ENCODE measurements at regions of chr12 and their contacts with region 1.

Region 1: GRCh38 chr12:102061560-102062418 is at the start of gene WASHC3:
- DNase-seq: peak; percentile 98
- H3K4me3 Mint-ChIP-seq: peak within 1 kb of the TSS; percentile 96
- H3K27ac Mint-ChIP-seq: peak within 1 kb of the TSS; percentile 98
- H3K4me1 Mint-ChIP-seq: peaks cover 29% of the 10 kb centered on the region
- H3K27me3 Mint-ChIP-seq: no peaks in the 10 kb centered on the region
- total RNA-seq, gene WASHC3: 22.1 to 25.6 TPM

Region 2: DNA sequence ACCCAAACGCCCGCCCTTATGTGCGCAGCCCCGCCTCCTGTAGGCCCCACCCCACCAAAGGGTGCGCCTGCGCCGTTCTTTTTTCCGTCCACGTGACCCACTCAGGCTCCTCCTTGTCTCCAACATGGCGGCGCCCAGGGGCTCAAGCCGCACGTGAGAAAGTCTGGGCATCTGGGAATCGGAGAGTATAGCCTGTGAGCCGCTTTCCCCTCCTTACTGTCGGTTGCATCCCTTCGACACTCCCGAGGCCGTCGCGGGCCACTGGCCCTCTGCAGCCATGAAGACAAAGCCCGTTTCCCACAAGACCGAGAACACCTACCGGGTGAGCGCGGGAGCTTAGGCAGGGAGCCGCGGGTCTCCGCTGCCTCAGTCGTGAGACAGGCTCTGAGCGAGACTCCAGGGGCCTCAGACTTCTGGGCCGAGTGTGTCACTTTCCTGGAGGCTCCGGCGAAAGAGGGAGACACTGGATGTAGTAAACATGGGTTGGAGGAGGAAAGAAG is 781.7 kb before region 1 on chr12 and contains the start of gene UTP20:
- CTCF ChIA-PET with region 1: no interaction called
- intact Hi-C with region 1: loop called (anchors 1 kb)
- DNase-seq: peak; percentile 96
- H3K4me3 Mint-ChIP-seq: peak within 1 kb of the TSS; percentile 94
- H3K27ac Mint-ChIP-seq: peak within 1 kb of the TSS; percentile 73
- H3K4me1 Mint-ChIP-seq: peaks cover 24% of the 10 kb centered on the region
- H3K27me3 Mint-ChIP-seq: peaks cover 6% of the 10 kb centered on the region
- total RNA-seq, gene UTP20: 15.8 to 16.8 TPM

Region 3: DNA sequence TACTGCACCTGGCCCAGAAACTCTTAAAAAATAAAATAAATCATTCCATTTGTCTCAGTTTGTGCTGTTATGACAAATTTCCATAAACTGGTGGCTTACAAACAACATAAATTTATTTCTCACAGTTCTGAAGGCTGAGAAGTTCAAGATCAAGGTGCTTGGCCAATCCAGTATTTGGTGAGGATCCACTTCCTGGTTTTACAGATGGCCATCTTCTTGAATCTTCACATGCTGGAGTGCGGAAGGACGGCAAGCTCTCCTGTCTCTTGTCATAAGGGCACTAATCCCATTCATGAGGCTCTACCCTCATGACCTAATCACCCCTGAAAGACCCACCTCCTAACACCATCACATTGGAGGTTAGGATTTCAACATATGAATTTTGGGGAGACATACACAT is 496.9 kb before region 1 on chr12:
- CTCF ChIA-PET with region 1: no interaction called
- intact Hi-C with region 1: loop called (anchors 1 kb)
- DNase-seq: peak; percentile 14
- H3K4me3 Mint-ChIP-seq: no peak overlapping the region
- H3K27ac Mint-ChIP-seq: no peak overlapping the region
- H3K4me1 Mint-ChIP-seq: peaks cover 21% of the 10 kb centered on the region
- H3K27me3 Mint-ChIP-seq: peaks cover 10% of the 10 kb centered on the region

Region 4: GRCh38 chr12:101792051-101792931 is 269.5 kb before region 1 on chr12:
- CTCF ChIA-PET with region 1: no interaction called
- intact Hi-C with region 1: loop called (anchors 10 kb)
- DNase-seq: no peak
- H3K4me3 Mint-ChIP-seq: no peak overlapping the region
- H3K27ac Mint-ChIP-seq: no peak overlapping the region
- H3K4me1 Mint-ChIP-seq: peaks cover 22% of the 10 kb centered on the region
- H3K27me3 Mint-ChIP-seq: no peaks in the 10 kb centered on the region

Region 5: DNA sequence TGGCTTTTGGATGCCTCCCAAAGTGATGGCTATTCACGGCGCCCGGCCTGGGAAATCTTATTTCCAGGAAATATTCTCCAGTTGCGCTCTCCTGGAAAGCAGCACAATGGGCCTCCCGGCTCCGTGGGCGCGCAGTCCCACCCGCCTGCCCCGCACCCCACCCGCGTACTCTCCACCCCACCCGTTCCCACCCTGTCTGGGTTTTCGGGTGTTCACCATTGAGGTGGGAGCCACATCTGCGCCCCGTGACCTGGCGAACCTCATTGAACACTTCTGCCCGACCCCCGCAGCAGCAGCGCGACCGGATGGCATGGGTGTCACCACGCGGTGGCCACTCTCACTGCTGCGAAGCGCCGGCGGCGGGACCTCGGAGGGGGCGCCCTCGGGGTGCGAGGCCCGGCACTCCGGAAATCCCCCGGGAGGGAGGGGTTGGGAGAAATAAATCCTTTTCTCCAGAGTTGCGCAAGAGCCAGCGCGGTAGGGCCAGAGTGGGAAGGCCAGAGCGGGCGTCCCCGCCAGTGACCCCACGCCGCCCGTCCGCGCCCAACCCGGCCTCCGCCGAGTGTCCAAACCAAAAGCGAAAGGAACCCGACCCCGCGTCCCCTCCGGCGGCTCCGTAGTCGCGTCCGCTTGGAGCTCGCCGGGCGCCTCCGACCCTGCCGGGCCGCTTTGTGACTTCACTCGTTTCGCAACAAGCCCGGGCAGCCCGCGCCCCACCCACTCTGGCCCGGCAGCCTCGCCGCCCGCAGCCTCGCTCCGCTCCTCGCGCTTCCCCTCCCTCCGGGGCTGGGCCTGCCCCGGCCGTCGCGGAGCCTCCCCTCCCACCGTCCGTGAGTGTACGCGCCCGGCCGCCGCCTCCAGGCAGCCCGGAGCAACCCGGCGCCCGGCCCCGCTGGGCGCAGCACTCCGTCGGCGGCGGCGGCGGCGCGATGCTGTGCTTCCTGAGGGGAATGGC is 184.7 kb before region 1 on chr12 and contains the start of gene DRAM1:
- CTCF ChIA-PET with region 1: no interaction called
- intact Hi-C with region 1: loop called (anchors 1 kb)
- DNase-seq: peak; percentile 83
- H3K4me3 Mint-ChIP-seq: peak within 1 kb of the TSS; percentile 91
- H3K27ac Mint-ChIP-seq: peak within 1 kb of the TSS; percentile 64
- H3K4me1 Mint-ChIP-seq: peaks cover 12% of the 10 kb centered on the region
- H3K27me3 Mint-ChIP-seq: peaks cover 3% of the 10 kb centered on the region
- total RNA-seq, gene DRAM1: 4.1 to 4.9 TPM

Region 6: DNA sequence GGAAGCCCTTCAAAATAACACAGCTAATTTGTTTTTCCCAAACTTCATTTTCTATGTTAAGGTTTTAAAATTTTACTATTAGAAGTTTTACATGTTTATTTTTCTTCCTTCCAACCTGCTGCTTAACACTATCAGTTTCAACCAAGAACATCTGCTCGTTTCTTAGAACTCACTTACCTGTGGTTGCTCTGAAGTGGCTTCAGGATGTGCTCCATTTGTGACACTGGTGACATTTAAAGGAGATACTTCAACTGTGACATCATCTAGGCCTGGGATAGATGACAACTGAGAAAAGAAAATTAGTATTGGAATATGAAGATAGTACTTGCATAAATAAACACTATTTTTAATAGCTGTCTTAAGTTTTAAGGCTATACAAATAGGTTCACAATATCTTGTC is 17.9 kb before region 1 on chr12:
- CTCF ChIA-PET with region 1: no interaction called
- intact Hi-C with region 1: loop called (anchors 1 kb)
- DNase-seq: peak; percentile 43
- H3K4me3 Mint-ChIP-seq: no peak overlapping the region
- H3K27ac Mint-ChIP-seq: no peak overlapping the region
- H3K4me1 Mint-ChIP-seq: peaks cover 13% of the 10 kb centered on the region
- H3K27me3 Mint-ChIP-seq: no peaks in the 10 kb centered on the region

Region 7: GRCh38 chr12:102144221-102144620 is 82.4 kb after region 1 on chr12:
- CTCF ChIA-PET with region 1: no interaction called
- intact Hi-C with region 1: no loop called
- DNase-seq: no peak
- H3K4me3 Mint-ChIP-seq: no peak overlapping the region
- H3K27ac Mint-ChIP-seq: no peak overlapping the region
- H3K4me1 Mint-ChIP-seq: peaks cover 14% of the 10 kb centered on the region
- H3K27me3 Mint-ChIP-seq: no peaks in the 10 kb centered on the region

Region 8: GRCh38 chr12:102484428-102484958 is 422.7 kb after region 1 on chr12:
- CTCF ChIA-PET with region 1: no interaction called
- intact Hi-C with region 1: loop called (anchors 1 kb)
- DNase-seq: peak; percentile 70
- H3K4me3 Mint-ChIP-seq: peak overlapping the region; percentile 32
- H3K27ac Mint-ChIP-seq: peak overlapping the region; percentile 87
- H3K4me1 Mint-ChIP-seq: peaks cover 22% of the 10 kb centered on the region
- H3K27me3 Mint-ChIP-seq: peaks cover 7% of the 10 kb centered on the region